ENCODE measurements at regions of chr2 and their contacts with region 1.

Region 1: GRCh38 chr2:14288016-14288415 is 344.5 kb upstream of the LRATD1 start:
- DNase-seq: no peak
- ATAC-seq: no peak
- H3K4me3 ChIP-seq: no peak overlapping the region
- H3K27ac ChIP-seq: no peak overlapping the region
- H3K4me1 ChIP-seq: no peaks in the 10 kb centered on the region
- H3K27me3 ChIP-seq: no peaks in the 10 kb centered on the region
- CTCF ChIP-seq: no peak

Region 2: DNA sequence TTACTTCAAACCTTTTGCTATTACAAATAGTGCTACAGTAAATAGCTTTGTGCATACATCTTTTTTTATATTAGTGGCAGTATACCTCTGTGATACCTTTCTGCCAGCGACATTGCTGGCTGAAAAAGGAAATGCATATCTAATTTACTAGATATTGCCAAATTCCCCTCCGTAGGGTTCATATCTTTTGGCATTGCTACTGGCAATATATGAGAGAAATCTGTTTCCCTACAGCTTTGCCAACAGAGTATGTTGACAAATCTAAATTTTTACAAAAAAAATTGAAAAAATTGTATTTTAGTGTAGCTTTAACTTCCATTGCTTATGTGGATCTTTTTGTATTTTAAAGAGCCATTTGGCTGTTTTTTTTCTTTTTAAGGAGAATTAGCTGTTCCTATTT is 1144.6 kb before region 1 on chr2:
- CTCF ChIA-PET with region 1: no interaction called
- POLR2A ChIA-PET with region 1: no interaction called
- in situ Hi-C with region 1: no loop called
- intact Hi-C with region 1: no loop called
- DNase-seq: no peak
- ATAC-seq: no peak
- H3K4me3 ChIP-seq: no peak overlapping the region
- H3K27ac ChIP-seq: no peak overlapping the region
- H3K4me1 ChIP-seq: no peaks in the 10 kb centered on the region
- H3K27me3 ChIP-seq: no peaks in the 10 kb centered on the region
- CTCF ChIP-seq: no peak; the same call in 1 of the 2 replicates

Region 3: DNA sequence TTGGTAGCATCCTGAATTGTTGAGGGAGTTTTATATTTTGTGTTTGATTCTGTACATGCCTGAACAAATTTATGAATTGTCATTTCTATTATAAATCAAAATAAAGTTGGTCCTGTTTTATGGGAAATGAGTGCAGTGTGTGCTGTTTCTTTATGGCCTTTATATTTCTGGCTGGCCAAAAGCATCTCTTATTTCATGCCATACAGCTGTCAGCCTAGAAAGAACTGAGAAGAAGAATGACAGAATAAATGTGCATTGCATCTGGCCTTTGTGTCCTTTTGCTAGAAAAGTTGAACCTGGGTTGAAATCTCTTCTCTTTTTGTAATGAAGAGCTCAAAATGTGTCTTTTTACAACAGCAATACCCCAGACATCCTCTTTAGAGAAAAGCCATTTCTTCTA is 130.2 kb before region 1 on chr2:
- CTCF ChIA-PET with region 1: no interaction called
- POLR2A ChIA-PET with region 1: no interaction called
- in situ Hi-C with region 1: no loop called
- intact Hi-C with region 1: no loop called
- DNase-seq: no peak
- ATAC-seq: no peak
- H3K4me3 ChIP-seq: no peak overlapping the region
- H3K27ac ChIP-seq: no peak overlapping the region
- H3K4me1 ChIP-seq: no peaks in the 10 kb centered on the region
- H3K27me3 ChIP-seq: no peaks in the 10 kb centered on the region
- CTCF ChIP-seq: no peak

Region 4: GRCh38 chr2:14324308-14324707 is 36.3 kb after region 1 on chr2:
- CTCF ChIA-PET with region 1: no interaction called
- POLR2A ChIA-PET with region 1: no interaction called
- in situ Hi-C with region 1: no loop called
- intact Hi-C with region 1: no loop called
- DNase-seq: no peak
- ATAC-seq: no peak
- H3K4me3 ChIP-seq: no peak overlapping the region
- H3K27ac ChIP-seq: no peak overlapping the region
- H3K4me1 ChIP-seq: no peaks in the 10 kb centered on the region
- H3K27me3 ChIP-seq: no peaks in the 10 kb centered on the region
- CTCF ChIP-seq: no peak

Region 5: GRCh38 chr2:14634201-14634884 is 346.3 kb after region 1 on chr2:
- CTCF ChIA-PET with region 1: interaction called, 12 read pairs
- POLR2A ChIA-PET with region 1: no interaction called
- in situ Hi-C with region 1: no loop called
- intact Hi-C with region 1: no loop called
- DNase-seq: no peak
- ATAC-seq: no peak
- H3K4me3 ChIP-seq: peak overlapping the region in 1 of 2 experiments; percentile 4; a peak in 1 of 4 replicates
- H3K27ac ChIP-seq: no peak overlapping the region
- H3K4me1 ChIP-seq: no peaks in the 10 kb centered on the region
- H3K27me3 ChIP-seq: no peaks in the 10 kb centered on the region
- CTCF ChIP-seq: no peak

Measured in Panc1 (cell line).